Gastrocnemius medialis (tissue), 4 donors: ENCODE measurements at regions of chr18 and their contacts with region 1.

Region 1: GRCh38 chr18:13216092-13216582 is 2.4 kb upstream of the LDLRAD4 start:
- DNase-seq: peak; percentile 71 to 73
- ATAC-seq: peak; percentile 55 to 59
- H3K4me3 ChIP-seq: peak overlapping the region in 1 of 4 donors; percentile 79
- H3K27ac ChIP-seq: peak overlapping the region; percentile 71 to 94 (median 81)
- H3K4me1 ChIP-seq: peaks cover 31 to 33% of the 10 kb centered on the region in 2 donors
- H3K27me3 ChIP-seq: no peaks in the 10 kb centered on the region
- CTCF ChIP-seq: peak; percentile 67 to 84 (median 72)
- POLR2A ChIP-seq: no peak

Region 2: DNA sequence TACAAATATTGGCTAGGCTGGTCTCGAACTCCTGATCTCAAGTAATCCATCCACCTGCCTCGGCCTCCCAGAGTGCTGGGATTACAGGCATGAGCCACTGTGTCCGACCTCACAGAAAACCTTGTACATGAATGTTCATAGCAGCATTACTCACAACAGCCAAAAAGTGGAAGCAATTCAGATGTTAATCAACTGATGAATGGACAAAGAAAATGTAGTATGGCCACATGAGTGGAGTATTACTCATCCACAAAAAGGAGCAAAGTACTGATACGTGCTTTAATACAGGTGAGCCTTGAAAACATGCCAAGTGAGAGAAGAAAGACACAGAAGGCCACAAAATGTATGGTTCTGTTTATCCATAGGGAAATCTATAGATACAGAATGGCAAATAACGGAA is 204.4 kb before region 1 on chr18:
- in situ Hi-C with region 1: no loop called
- intact Hi-C with region 1: no loop called
- DNase-seq: no peak
- ATAC-seq: no peak
- H3K4me3 ChIP-seq: no peak overlapping the region
- H3K27ac ChIP-seq: no peak overlapping the region
- H3K4me1 ChIP-seq: no peaks in the 10 kb centered on the region
- H3K27me3 ChIP-seq: no peaks in the 10 kb centered on the region
- CTCF ChIP-seq: no peak
- POLR2A ChIP-seq: no peak

Region 3: DNA sequence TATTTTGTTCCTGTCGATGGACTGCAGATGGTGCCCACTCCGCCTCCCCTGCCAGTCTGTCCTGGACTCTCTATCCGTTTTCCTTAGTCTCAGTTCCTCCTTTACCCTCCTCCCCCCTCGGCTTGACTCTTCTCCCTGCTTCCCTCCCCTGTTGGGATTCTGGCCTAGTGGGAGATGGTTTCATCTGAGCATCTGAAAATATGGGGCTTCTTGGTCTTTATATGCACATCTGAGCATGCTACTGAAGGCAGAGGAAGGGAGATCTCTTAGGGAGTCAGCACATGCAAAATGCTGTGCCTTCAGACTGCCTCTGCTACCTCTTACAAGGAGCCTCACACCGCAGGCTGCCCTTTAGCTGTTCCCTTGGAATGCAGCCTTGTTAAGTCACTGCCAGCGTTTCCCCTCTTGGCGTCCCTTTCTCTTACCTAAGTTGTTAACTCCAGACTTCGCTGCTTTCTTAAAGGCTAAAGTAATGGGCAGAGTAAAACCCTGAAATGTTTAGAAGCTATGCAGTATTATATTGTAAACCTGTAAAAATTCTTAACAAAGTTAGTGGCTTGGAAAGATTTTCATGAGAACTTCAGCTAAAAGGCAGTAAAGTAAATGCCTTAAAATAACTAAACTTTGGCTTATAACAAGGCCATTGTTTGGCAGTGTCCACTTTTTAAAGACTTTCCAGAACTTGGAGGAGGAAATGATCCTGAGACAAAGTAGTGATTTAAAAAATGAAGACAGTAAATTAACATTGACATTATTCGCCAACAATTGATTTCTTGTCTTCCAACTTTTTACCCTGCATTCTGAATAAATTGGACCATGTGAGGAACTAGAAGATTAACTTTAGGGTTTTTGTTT is 52.2 kb after region 1 on chr18:
- in situ Hi-C with region 1: loop called in 1 of 4 experiments (anchors 10 kb)
- intact Hi-C with region 1: loop called (anchors 5 kb)
- DNase-seq: no peak
- ATAC-seq: peak in 1 of 2 donors; percentile 14
- H3K4me3 ChIP-seq: no peak overlapping the region
- H3K27ac ChIP-seq: peak overlapping the region; percentile 1 to 56 (median 24)
- H3K4me1 ChIP-seq: peaks cover 51 to 64% of the 10 kb centered on the region in 2 donors
- H3K27me3 ChIP-seq: no peaks in the 10 kb centered on the region
- CTCF ChIP-seq: no peak
- POLR2A ChIP-seq: no peak

Region 4: DNA sequence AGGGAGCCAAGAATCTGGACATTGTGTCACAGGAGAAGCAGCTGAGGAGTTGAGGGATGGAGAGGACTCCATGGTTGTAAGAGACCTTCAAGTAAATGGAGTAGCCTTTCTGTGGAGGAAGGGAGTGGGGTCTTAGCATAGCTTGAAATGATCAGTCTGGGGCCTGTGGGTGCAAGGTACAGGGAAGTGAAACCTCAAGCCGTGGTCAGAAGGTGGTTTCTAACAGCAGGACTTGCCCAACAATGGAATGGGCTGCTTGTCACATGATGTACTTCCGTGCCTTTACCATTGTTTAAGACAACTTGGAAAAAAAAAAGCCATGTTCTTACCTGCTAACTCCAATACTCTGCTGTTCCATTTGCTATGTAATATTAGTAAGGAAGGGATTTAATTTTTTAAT is 143.1 kb after region 1 on chr18:
- in situ Hi-C with region 1: no loop called
- intact Hi-C with region 1: no loop called
- DNase-seq: no peak
- ATAC-seq: no peak
- H3K4me3 ChIP-seq: no peak overlapping the region
- H3K27ac ChIP-seq: no peak overlapping the region
- H3K4me1 ChIP-seq: no peaks in the 10 kb centered on the region
- H3K27me3 ChIP-seq: no peaks in the 10 kb centered on the region
- CTCF ChIP-seq: no peak
- POLR2A ChIP-seq: no peak

Region 5: DNA sequence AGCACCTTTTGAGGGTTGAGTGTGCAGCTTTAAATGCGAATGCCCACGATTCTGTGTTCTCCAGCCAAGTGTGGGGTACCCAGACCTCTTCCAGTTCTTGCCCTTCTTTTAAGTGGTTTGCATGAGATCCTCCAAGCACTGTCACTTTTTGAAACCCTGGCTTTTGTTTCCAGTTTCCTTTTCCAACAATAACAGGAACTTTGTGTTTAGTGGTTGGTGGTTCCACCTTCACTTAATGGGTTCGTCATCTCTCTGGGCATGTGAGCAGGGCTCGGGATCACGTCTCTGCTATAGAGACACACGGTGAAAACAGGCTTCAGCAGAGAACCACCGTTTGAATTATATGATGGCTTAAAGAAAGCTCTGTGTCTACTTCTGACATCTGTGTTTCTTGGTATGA is 200.1 kb after region 1 on chr18:
- in situ Hi-C with region 1: no loop called
- intact Hi-C with region 1: loop called (anchors 10 kb)
- DNase-seq: no peak
- ATAC-seq: peak in 1 of 2 donors; percentile 49
- H3K4me3 ChIP-seq: no peak overlapping the region
- H3K27ac ChIP-seq: peak overlapping the region; percentile 0 to 71 (median 59)
- H3K4me1 ChIP-seq: peaks cover 26 to 48% of the 10 kb centered on the region in 2 donors
- H3K27me3 ChIP-seq: no peaks in the 10 kb centered on the region
- CTCF ChIP-seq: no peak
- POLR2A ChIP-seq: no peak

Region 6: DNA sequence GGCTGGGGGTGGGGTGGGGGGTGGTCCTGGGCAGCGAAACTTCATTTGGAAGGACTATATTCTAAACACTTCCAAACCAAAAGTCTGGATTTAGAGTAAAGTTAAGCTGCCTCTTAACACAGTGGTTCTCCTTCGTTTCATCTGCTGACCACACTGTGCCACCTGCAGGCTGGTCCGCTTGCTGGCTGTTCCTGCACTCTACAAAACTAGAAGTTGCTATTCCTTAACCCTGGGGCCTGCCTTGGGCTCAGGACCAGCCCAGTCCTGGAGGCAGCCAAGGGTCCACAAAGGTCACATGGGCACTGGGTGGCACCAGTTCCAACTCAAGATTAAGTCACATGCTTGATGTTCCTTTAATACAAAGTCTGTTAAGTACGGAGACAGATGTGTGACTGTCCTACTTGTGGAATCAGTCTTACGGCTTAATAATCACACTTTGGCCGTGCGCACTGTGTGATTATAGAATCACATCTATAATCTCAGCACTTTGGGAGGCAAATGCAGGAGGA is 314.8 kb after region 1 on chr18:
- in situ Hi-C with region 1: loop called in 3 of 4 experiments (anchors 10 to 25 kb)
- intact Hi-C with region 1: loop called (anchors 1 kb)
- DNase-seq: peak; percentile 57 to 72
- ATAC-seq: peak; percentile 89 to 91
- H3K4me3 ChIP-seq: no peak overlapping the region
- H3K27ac ChIP-seq: peak overlapping the region in 1 of 4 donors; percentile 49
- H3K4me1 ChIP-seq: peaks cover 6 to 14% of the 10 kb centered on the region in 2 donors
- H3K27me3 ChIP-seq: no peaks in the 10 kb centered on the region
- CTCF ChIP-seq: peak; percentile 42 to 76 (median 60)
- POLR2A ChIP-seq: no peak

Region 7: GRCh38 chr18:13703899-13704298 is 487.8 kb after region 1 on chr18:
- in situ Hi-C with region 1: loop called in 1 of 4 experiments (anchors 25 kb)
- intact Hi-C with region 1: no loop called
- DNase-seq: no peak
- ATAC-seq: no peak
- H3K4me3 ChIP-seq: no peak overlapping the region
- H3K27ac ChIP-seq: no peak overlapping the region
- H3K4me1 ChIP-seq: no peaks in the 10 kb centered on the region
- H3K27me3 ChIP-seq: no peaks in the 10 kb centered on the region
- CTCF ChIP-seq: no peak
- POLR2A ChIP-seq: no peak

Region 8: GRCh38 chr18:13813271-13813849 is 597.2 kb after region 1 on chr18:
- in situ Hi-C with region 1: no loop called
- intact Hi-C with region 1: loop called (anchors 10 kb)
- DNase-seq: peak in 1 of 2 donors; percentile 16
- ATAC-seq: peak; percentile 77 to 87
- H3K4me3 ChIP-seq: no peak overlapping the region
- H3K27ac ChIP-seq: no peak overlapping the region
- H3K4me1 ChIP-seq: no peaks in the 10 kb centered on the region
- H3K27me3 ChIP-seq: no peaks in the 10 kb centered on the region
- CTCF ChIP-seq: peak; percentile 44 to 85 (median 60)
- POLR2A ChIP-seq: no peak